ENCODE measurements at regions of chr17 and their contacts with region 1.

Region 1: GRCh38 chr17:49031965-49032928 is 35.1 kb downstream of the IGF2BP1 start:
- H3K4me3 ChIP-seq: no peak overlapping the region
- H3K27ac ChIP-seq: 0 out of 2 replicates have a peak overlapping the region, but pooled peaks have one; percentile 5
- H3K4me1 ChIP-seq: no peaks in the 10 kb centered on the region; the same call in 1 of the 2 replicates
- CTCF ChIP-seq: peak; percentile 73

Region 2: GRCh38 chr17:48804925-48805411 is 227.3 kb before region 1 on chr17:
- CTCF ChIA-PET with region 1: interaction called, 12 read pairs
- POLR2A ChIA-PET with region 1: no interaction called
- H3K4me3 ChIP-seq: no peak overlapping the region
- H3K27ac ChIP-seq: no peak overlapping the region
- H3K4me1 ChIP-seq: peaks cover 4% of the 10 kb centered on the region
- CTCF ChIP-seq: peak; percentile 76

Region 3: GRCh38 chr17:48830840-48831548 is 201.3 kb before region 1 on chr17 and contains the start of gene CALCOCO2:
- CTCF ChIA-PET with region 1: no interaction called
- POLR2A ChIA-PET with region 1: no interaction called
- H3K4me3 ChIP-seq: peak within 1 kb of the TSS; percentile 74
- H3K27ac ChIP-seq: peak within 1 kb of the TSS; percentile 56; the same call in 1 of the 2 replicates
- H3K4me1 ChIP-seq: no peaks in the 10 kb centered on the region
- CTCF ChIP-seq: peak; percentile 85

Region 4: DNA sequence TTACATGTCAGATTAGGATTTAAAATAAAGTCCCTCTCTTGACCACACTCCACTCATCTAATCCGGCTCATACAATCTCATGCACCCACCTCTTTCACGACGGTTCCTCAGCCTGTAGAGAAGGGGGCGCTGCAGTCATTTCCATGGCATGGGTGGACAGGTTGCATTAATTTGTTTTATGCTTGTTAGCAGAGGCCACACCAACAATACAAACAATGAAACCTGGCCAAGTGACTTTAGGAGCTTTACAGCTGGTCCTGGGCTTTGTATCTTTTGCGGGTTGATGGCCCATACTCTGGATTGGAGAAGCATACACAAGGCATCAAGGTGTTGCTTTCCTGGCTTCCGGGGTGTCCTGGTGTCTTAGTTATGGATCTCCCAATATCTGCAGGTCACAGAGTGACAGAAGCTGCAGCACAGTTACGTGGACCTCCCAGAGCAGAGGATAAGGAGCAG is 77.9 kb before region 1 on chr17:
- CTCF ChIA-PET with region 1: interaction called, 58 read pairs
- POLR2A ChIA-PET with region 1: interaction called, 3 read pairs
- H3K4me3 ChIP-seq: no peak overlapping the region
- H3K27ac ChIP-seq: no peak overlapping the region
- H3K4me1 ChIP-seq: no peaks in the 10 kb centered on the region; the same call in 1 of the 2 replicates
- CTCF ChIP-seq: peak; percentile 73

Region 5: DNA sequence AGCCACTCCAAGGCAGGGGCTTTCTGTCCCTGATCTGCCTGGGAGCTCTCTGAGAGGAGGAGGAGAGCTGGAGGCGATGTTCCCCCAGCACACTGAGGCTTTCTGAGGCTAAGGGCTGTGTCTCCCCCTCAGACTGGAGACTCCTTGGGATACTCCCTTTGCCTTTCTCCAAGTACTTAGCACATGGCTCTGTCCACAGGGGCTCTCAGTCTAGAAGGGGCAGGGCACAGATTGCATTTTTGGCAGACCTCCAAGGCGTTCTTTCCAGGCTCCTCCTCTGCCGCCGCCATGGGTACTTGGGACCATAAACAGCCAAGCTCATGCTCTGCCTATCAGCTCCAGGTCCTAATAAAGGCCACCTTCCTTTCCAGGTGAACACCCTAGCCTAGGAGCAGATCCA is 62.0 kb before region 1 on chr17:
- CTCF ChIA-PET with region 1: interaction called, 10 read pairs
- POLR2A ChIA-PET with region 1: no interaction called
- H3K4me3 ChIP-seq: no peak overlapping the region
- H3K27ac ChIP-seq: peak overlapping the region; percentile 13; the same call in 1 of the 2 replicates
- H3K4me1 ChIP-seq: peaks cover 15% of the 10 kb centered on the region
- CTCF ChIP-seq: no peak

Region 6: DNA sequence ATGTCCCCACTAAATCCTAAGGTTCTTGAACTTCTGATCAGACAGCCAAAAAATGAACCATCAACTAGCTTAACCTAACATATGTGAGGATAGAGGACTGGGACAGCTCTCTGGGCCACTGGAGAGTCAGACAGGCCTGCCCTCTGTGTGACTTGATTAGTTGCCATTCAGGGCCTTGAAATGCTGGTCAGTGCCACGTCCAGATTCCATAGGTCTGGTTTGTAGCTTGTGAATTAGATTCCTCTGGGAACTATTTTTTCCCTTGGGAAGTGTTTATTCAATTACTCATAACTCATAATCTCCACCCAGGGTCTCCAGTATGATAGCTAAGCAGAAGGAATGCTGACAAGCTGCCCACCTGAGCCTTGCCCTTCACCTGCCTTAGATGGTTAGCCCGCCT is 13.1 kb after region 1 on chr17:
- CTCF ChIA-PET with region 1: interaction called, 15 read pairs
- POLR2A ChIA-PET with region 1: interaction called, 4 read pairs
- H3K4me3 ChIP-seq: no peak overlapping the region
- H3K27ac ChIP-seq: no peak overlapping the region; the same call in 1 of the 2 replicates
- H3K4me1 ChIP-seq: no peaks in the 10 kb centered on the region
- CTCF ChIP-seq: no peak

Region 7: GRCh38 chr17:49201481-49201927 is 169.3 kb after region 1 on chr17:
- CTCF ChIA-PET with region 1: no interaction called
- POLR2A ChIA-PET with region 1: no interaction called
- H3K4me3 ChIP-seq: no peak overlapping the region
- H3K27ac ChIP-seq: no peak overlapping the region
- H3K4me1 ChIP-seq: no peaks in the 10 kb centered on the region
- CTCF ChIP-seq: no peak

Measured in HEK293 (cell line).